B cell (primary cell): ENCODE measurements at regions of chr19 and their contacts with region 1.

Region 1: DNA sequence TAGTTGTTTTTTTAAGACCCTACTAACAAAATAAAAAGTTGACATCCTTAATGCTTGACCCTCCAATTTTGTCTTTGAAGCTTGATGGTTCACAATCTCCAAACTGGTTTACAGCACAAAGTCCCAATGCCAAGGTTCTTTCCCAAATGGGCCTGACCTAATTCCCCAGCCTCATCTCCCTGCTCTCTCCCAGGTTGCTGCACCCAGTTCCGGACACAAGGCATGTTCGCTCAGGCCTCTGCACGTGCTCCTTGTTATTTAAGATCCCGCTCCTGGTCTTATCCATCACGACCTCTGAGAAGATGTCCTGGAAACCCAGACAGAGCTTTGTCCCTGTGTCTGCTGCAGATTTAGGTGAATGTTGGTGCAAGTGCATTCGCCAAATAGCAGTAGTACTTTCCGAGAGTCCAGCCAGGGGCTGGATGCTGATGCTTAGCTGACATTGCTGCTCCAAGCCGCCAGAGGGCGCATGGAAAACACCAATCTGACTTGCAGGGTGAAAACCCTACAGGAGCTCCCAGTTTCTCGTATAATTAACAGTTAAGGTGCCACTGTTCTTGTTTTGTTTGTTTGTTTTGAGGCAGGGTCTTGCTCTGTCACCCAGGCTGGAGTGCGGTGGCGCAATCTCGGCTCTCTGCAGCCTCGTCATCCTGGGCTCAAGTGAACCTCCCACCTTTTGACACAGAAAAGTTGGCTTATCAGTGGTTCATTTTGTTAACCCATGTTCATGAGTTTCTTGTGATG is 18.5 kb downstream of the LYPD3 start:
- DNase-seq: peak; percentile 86
- ATAC-seq: peak; percentile 89
- H3K4me3 ChIP-seq: no peak overlapping the region
- H3K4me3 Mint-ChIP-seq: no peak overlapping the region
- H3K27ac ChIP-seq: no peak overlapping the region
- H3K27ac Mint-ChIP-seq: peak overlapping the region; percentile 8
- H3K4me1 ChIP-seq: peaks cover 0 to 7% of the 10 kb centered on the region in 2 donors
- H3K4me1 Mint-ChIP-seq: peaks cover 5% of the 10 kb centered on the region
- H3K27me3 ChIP-seq: no peaks in the 10 kb centered on the region
- H3K27me3 Mint-ChIP-seq: no peaks in the 10 kb centered on the region
- CTCF ChIP-seq: peak; percentile 95

Region 2: GRCh38 chr19:43408043-43408442 is 38.9 kb before region 1 on chr19:
- CTCF ChIA-PET with region 1: no interaction called
- POLR2A ChIA-PET with region 1: no interaction called
- intact Hi-C with region 1: no loop called
- DNase-seq: no peak
- ATAC-seq: no peak
- H3K4me3 ChIP-seq: no peak overlapping the region
- H3K4me3 Mint-ChIP-seq: no peak overlapping the region
- H3K27ac ChIP-seq: no peak overlapping the region
- H3K27ac Mint-ChIP-seq: no peak overlapping the region
- H3K4me1 ChIP-seq: no peaks in the 10 kb centered on the region
- H3K4me1 Mint-ChIP-seq: no peaks in the 10 kb centered on the region
- H3K27me3 ChIP-seq: peaks cover 0 to 8% (median 0%) of the 10 kb centered on the region in 4 experiments
- H3K27me3 Mint-ChIP-seq: peaks cover 13% of the 10 kb centered on the region
- CTCF ChIP-seq: no peak

Region 3: GRCh38 chr19:43457809-43458208 is 10.9 kb after region 1 on chr19:
- CTCF ChIA-PET with region 1: interaction called, 40 read pairs
- POLR2A ChIA-PET with region 1: no interaction called
- intact Hi-C with region 1: no loop called
- DNase-seq: no peak
- ATAC-seq: no peak
- H3K4me3 ChIP-seq: no peak overlapping the region
- H3K4me3 Mint-ChIP-seq: no peak overlapping the region
- H3K27ac ChIP-seq: no peak overlapping the region
- H3K27ac Mint-ChIP-seq: no peak overlapping the region
- H3K4me1 ChIP-seq: peaks cover 0 to 8% of the 10 kb centered on the region in 2 donors
- H3K4me1 Mint-ChIP-seq: peaks cover 3% of the 10 kb centered on the region
- H3K27me3 ChIP-seq: no peaks in the 10 kb centered on the region
- H3K27me3 Mint-ChIP-seq: peaks cover 4% of the 10 kb centered on the region
- CTCF ChIP-seq: no peak

Region 4: GRCh38 chr19:43503501-43504425 is 56.8 kb after region 1 on chr19:
- CTCF ChIA-PET with region 1: interaction called, 45 read pairs
- POLR2A ChIA-PET with region 1: no interaction called
- intact Hi-C with region 1: no loop called
- DNase-seq: peak; percentile 97
- ATAC-seq: peak; percentile 95
- H3K4me3 ChIP-seq: peak overlapping the region; percentile 65 to 97 (median 76)
- H3K4me3 Mint-ChIP-seq: peak overlapping the region; percentile 95
- H3K27ac ChIP-seq: peak overlapping the region; percentile 80 to 82
- H3K27ac Mint-ChIP-seq: peak overlapping the region; percentile 98
- H3K4me1 ChIP-seq: peaks cover 12 to 22% of the 10 kb centered on the region in 2 donors
- H3K4me1 Mint-ChIP-seq: peaks cover 23% of the 10 kb centered on the region
- H3K27me3 ChIP-seq: no peaks in the 10 kb centered on the region
- H3K27me3 Mint-ChIP-seq: no peaks in the 10 kb centered on the region
- CTCF ChIP-seq: no peak

Region 5: GRCh38 chr19:43519436-43520088 is 72.6 kb after region 1 on chr19:
- CTCF ChIA-PET with region 1: interaction called, 644 read pairs
- POLR2A ChIA-PET with region 1: interaction called, 18 read pairs
- intact Hi-C with region 1: loop called (anchors 1 kb)
- DNase-seq: peak; percentile 87
- ATAC-seq: peak; percentile 59
- H3K4me3 ChIP-seq: no peak overlapping the region
- H3K4me3 Mint-ChIP-seq: peak overlapping the region; percentile 57
- H3K27ac ChIP-seq: no peak overlapping the region
- H3K27ac Mint-ChIP-seq: peak overlapping the region; percentile 87
- H3K4me1 ChIP-seq: peaks cover 15 to 23% of the 10 kb centered on the region in 2 donors
- H3K4me1 Mint-ChIP-seq: peaks cover 17% of the 10 kb centered on the region
- H3K27me3 ChIP-seq: no peaks in the 10 kb centered on the region
- H3K27me3 Mint-ChIP-seq: no peaks in the 10 kb centered on the region
- CTCF ChIP-seq: peak; percentile 93

Region 6: DNA sequence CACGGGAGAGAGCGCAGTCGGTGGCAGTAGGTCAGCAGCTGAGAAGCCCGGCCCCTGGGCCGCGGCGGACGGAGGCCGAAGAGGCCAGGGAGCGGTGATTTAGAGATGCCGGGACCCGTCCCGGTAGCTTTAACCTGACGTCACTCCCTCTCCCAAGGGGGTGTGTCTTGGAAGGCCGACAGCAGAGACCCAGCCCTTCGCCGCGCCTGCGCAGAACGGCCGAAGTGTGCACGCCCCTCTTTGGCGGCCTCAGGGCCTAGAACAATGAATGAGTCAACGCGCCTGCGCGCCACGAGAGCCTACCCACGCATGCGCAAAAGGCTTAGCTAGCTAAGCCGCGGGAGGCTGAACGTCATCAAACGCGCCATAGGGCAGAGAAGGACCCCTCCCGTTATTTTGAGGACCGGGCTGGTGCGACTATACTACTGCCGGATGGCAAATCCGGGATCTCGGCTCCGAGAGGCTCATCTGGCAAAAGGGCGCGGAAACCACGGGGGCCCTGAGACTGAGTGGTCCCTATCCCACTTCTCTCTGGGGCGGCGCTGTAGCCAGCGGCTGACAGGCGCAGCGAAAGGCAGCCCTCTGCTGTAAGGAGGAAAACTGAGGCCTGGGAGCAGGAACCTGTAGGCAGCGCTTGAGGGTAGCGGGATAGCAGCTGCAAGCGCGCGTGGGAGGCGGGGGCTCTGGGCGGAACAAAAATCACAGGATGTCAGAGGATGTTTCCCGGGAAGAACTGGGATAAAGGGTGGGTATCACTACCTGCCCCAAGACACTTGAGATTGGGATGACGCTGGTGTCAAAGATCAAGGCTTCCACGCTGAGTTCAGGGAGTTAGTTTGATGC is 149.3 kb after region 1 on chr19 and contains the starts of genes IRGQ and ZNF576:
- CTCF ChIA-PET with region 1: interaction called, 47 read pairs
- POLR2A ChIA-PET with region 1: no interaction called
- intact Hi-C with region 1: loop called (anchors 1 kb)
- DNase-seq: peak; percentile 100
- ATAC-seq: peak; percentile 88
- H3K4me3 ChIP-seq: peak within 1 kb of the TSS; percentile 61 to 88 (median 73)
- H3K4me3 Mint-ChIP-seq: peak within 1 kb of the TSS; percentile 98
- H3K27ac ChIP-seq: peak within 1 kb of the TSS; percentile 95 to 97
- H3K27ac Mint-ChIP-seq: peak within 1 kb of the TSS; percentile 99
- H3K4me1 ChIP-seq: peaks cover 16 to 38% of the 10 kb centered on the region in 2 donors
- H3K4me1 Mint-ChIP-seq: peaks cover 43% of the 10 kb centered on the region
- H3K27me3 ChIP-seq: no peaks in the 10 kb centered on the region
- H3K27me3 Mint-ChIP-seq: no peaks in the 10 kb centered on the region
- CTCF ChIP-seq: no peak
- total RNA-seq, gene IRGQ: 20.3 and 20.5 TPM in 2 replicates
- total RNA-seq, gene ZNF576: 17.3 and 23.2 TPM in 2 replicates

Region 7: DNA sequence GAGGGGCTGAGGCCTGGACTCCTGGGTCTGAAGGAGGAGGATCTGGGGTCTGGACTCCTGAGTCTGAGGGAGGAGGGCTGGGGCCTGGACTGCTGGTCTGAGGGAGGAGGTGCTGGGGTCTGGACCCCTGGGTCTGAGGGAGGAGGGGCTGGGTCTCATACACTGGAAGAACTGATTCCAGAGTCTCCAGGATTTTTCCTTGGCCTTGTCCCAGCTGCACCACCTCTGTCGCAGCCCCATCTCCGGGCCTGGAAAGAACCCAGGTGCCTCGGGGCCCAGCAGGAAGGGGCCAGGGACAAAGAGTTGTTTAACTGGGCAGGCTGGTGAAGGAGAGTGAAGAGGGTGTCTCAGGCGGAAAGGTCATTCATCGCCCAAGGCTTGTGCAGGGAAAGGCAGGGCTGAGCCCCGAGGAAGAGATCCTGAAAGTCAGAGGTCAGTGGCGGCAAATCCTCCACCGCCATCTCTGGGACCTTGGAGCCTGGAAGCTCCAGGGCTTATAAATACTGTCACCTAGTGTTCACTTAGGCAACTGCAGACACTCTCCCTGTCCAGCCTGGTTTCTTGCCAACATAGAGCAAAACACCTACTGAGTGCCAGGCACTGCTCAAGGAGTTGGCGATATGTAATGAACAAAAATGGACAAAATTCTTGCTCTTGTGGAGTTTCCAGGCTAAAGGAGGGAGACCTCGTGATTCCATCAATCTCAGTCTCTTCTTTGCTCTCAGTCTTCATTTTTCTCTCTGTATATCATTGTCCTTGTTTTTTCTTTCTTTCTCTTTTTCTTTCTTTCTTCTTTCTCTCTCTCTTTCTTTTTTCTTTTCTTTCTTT is 338.3 kb after region 1 on chr19:
- CTCF ChIA-PET with region 1: interaction called, 5 read pairs
- POLR2A ChIA-PET with region 1: no interaction called
- intact Hi-C with region 1: loop called (anchors 10 kb)
- DNase-seq: peak; percentile 84
- ATAC-seq: peak; percentile 25
- H3K4me3 ChIP-seq: no peak overlapping the region
- H3K4me3 Mint-ChIP-seq: peak overlapping the region; percentile 68
- H3K27ac ChIP-seq: peak overlapping the region; percentile 73 to 85
- H3K27ac Mint-ChIP-seq: peak overlapping the region; percentile 99
- H3K4me1 ChIP-seq: peaks cover 38 to 51% of the 10 kb centered on the region in 2 donors
- H3K4me1 Mint-ChIP-seq: peaks cover 47% of the 10 kb centered on the region
- H3K27me3 ChIP-seq: no peaks in the 10 kb centered on the region
- H3K27me3 Mint-ChIP-seq: no peaks in the 10 kb centered on the region
- CTCF ChIP-seq: peak; percentile 99